ENCODE measurements at regions of chr2 and their contacts with region 1.

Region 1: GRCh38 chr2:211281430-211282073 is 725.2 kb downstream of the CPS1 start:
- DNase-seq: peak in 1 of 2 experiments; percentile 1
- H3K4me3 ChIP-seq: no peak overlapping the region
- H3K27ac ChIP-seq: no peak overlapping the region
- H3K4me1 ChIP-seq: peaks cover 0 to 4% (median 0%) of the 10 kb centered on the region in 4 experiments; a peak in 2 of 7 replicates
- H3K27me3 ChIP-seq: no peaks in the 10 kb centered on the region
- CTCF ChIP-seq: peak in 1 of 3 experiments; percentile 2; a peak in 2 of 4 replicates
- EP300 ChIP-seq: no peak
- POLR2A ChIP-seq: no peak
- RAD21 ChIP-seq: peak; percentile 38 to 43

Region 2: GRCh38 chr2:211216221-211216620 is 65.3 kb before region 1 on chr2:
- CTCF ChIA-PET with region 1: interaction called, 12 read pairs
- POLR2A ChIA-PET with region 1: no interaction called
- DNase-seq: no peak
- H3K4me3 ChIP-seq: no peak overlapping the region
- H3K27ac ChIP-seq: no peak overlapping the region
- H3K4me1 ChIP-seq: no peaks in the 10 kb centered on the region
- H3K27me3 ChIP-seq: no peaks in the 10 kb centered on the region
- CTCF ChIP-seq: peak in 2 of 3 experiments; percentile 41 to 59; a peak in 2 of 4 replicates
- EP300 ChIP-seq: no peak
- POLR2A ChIP-seq: no peak
- RAD21 ChIP-seq: peak; percentile 69

Region 3: GRCh38 chr2:211396815-211397214 is 115.3 kb after region 1 on chr2:
- CTCF ChIA-PET with region 1: no interaction called
- POLR2A ChIA-PET with region 1: no interaction called
- DNase-seq: no peak
- H3K4me3 ChIP-seq: no peak overlapping the region
- H3K27ac ChIP-seq: no peak overlapping the region
- H3K4me1 ChIP-seq: peaks cover 0 to 2% (median 0%) of the 10 kb centered on the region in 4 experiments; a peak in 1 of 7 replicates
- H3K27me3 ChIP-seq: no peaks in the 10 kb centered on the region
- CTCF ChIP-seq: no peak
- EP300 ChIP-seq: no peak
- POLR2A ChIP-seq: no peak
- RAD21 ChIP-seq: no peak